IMR-90 (cell line): ENCODE measurements at regions of chr5 and their contacts with region 1.

Region 1: GRCh38 chr5:134825212-134825611 is 20.6 kb upstream of the C5orf24 start:
- DNase-seq: no peak
- ATAC-seq: no peak
- H3K4me3 ChIP-seq: no peak overlapping the region
- H3K27ac ChIP-seq: no peak overlapping the region
- H3K4me1 ChIP-seq: no peaks in the 10 kb centered on the region
- H3K27me3 ChIP-seq: no peaks in the 10 kb centered on the region
- CTCF ChIP-seq: no peak
- POLR2A ChIP-seq: no peak
- RAD21 ChIP-seq: no peak

Region 2: DNA sequence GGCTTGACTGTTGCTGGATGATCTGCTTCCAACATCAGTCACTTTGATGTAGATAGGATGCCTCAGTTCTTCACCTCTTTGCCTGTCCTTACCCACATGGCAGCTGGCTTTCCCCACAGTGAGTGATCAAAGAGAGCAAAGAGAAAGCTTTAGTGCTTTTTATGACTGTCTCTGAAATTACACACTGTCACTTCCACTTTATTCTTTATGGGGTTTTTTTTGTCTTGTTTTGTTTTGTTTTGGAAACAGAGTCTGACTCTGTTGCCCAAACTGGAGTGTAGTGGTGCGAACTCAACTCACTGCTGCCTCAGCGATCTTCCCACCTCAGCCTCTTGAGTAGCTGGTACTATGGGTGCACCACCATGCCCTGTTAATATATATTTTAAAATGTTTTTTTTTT is 11.8 kb before region 1 on chr5:
- CTCF ChIA-PET with region 1: no interaction called
- POLR2A ChIA-PET with region 1: interaction called, 14 read pairs
- dilution Hi-C with region 1: no loop called
- in situ Hi-C with region 1: no loop called
- intact Hi-C with region 1: no loop called
- DNase-seq: no peak
- ATAC-seq: no peak
- H3K4me3 ChIP-seq: no peak overlapping the region
- H3K27ac ChIP-seq: no peak overlapping the region
- H3K4me1 ChIP-seq: no peaks in the 10 kb centered on the region
- H3K27me3 ChIP-seq: no peaks in the 10 kb centered on the region
- CTCF ChIP-seq: no peak
- POLR2A ChIP-seq: no peak
- RAD21 ChIP-seq: no peak

Region 3: DNA sequence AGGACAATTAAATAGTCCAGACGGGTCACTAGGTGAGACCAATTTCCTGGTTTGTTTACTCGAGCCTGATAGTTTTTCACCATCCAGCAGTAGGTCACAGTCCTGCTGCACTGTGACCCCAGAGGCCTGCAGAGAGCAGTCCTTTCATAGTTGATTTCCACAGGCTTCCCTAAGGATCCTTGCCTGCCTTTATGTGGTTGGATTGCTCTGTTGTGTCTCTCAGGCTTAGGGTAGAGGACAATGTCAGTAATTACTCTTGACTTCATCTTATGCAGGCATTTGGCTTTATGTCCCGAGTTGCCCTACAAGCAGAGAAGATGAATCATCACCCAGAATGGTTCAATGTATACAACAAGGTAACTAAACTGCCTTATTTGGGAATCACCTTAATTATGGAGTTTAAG is 133.6 kb after region 1 on chr5:
- CTCF ChIA-PET with region 1: no interaction called
- POLR2A ChIA-PET with region 1: no interaction called
- dilution Hi-C with region 1: no loop called
- in situ Hi-C with region 1: no loop called
- intact Hi-C with region 1: no loop called
- DNase-seq: peak; percentile 26
- ATAC-seq: peak; percentile 68
- H3K4me3 ChIP-seq: no peak overlapping the region
- H3K27ac ChIP-seq: no peak overlapping the region
- H3K4me1 ChIP-seq: peaks cover 6% of the 10 kb centered on the region
- H3K27me3 ChIP-seq: no peaks in the 10 kb centered on the region
- CTCF ChIP-seq: no peak
- POLR2A ChIP-seq: no peak
- RAD21 ChIP-seq: no peak